ENCODE measurements at regions of chr10 and their contacts with region 1.

Region 1: DNA sequence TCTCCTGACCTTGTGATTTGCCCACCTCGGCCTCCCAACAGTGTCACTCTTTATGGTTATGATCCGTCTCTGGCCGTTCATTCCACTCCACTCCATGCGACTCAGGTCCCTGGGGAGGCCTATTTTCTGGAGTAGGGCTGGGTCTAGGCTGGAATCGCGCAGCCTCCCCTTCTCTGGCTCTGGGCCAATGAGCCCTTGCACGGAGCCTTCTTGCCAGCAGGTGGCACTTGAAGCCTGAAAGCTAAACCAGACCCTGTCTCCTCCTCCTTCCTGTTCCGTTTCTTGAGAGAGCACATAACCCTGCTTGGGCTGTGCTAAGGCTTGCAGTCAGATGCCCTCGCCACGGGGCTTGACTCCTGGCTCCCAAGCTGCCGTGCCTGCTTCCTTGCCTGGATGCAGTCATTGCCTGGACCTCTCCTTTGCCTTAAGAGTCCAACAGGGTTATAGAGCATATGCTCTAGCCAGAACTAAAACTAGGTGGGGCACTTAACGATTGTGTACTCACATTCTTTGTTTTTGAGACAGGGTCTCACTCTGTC is 9.6 kb upstream of the DNAJB12 start:
- DNase-seq: peak; percentile 88
- ATAC-seq: peak; percentile 96 to 98
- H3K4me3 ChIP-seq: no peak overlapping the region
- H3K27ac ChIP-seq: peak overlapping the region; percentile 46
- H3K4me1 ChIP-seq: peaks cover 13% of the 10 kb centered on the region
- H3K27me3 ChIP-seq: no peaks in the 10 kb centered on the region
- CTCF ChIP-seq: peak; percentile 95

Region 2: GRCh38 chr10:72834183-72834825 is 470.0 kb after region 1 on chr10:
- intact Hi-C with region 1: loop called (anchors 10 kb)
- DNase-seq: no peak
- ATAC-seq: peak; percentile 67 to 81
- H3K4me3 ChIP-seq: no peak overlapping the region
- H3K27ac ChIP-seq: no peak overlapping the region
- H3K4me1 ChIP-seq: peaks cover 28% of the 10 kb centered on the region
- H3K27me3 ChIP-seq: no peaks in the 10 kb centered on the region
- CTCF ChIP-seq: peak; percentile 58

Measured in lower lobe of right lung (tissue), 2 donors.